GM23248 (cell line): ENCODE measurements at regions of chr13 and their contacts with region 1.

Region 1: GRCh38 chr13:102580552-102581169 is 16.1 kb upstream of the TPP2 start:
- DNase-seq: peak; percentile 78
- H3K4me3 ChIP-seq: no peak overlapping the region
- H3K27ac ChIP-seq: no peak overlapping the region
- H3K4me1 ChIP-seq: no peaks in the 10 kb centered on the region
- H3K27me3 ChIP-seq: peaks cover 15% of the 10 kb centered on the region

Region 2: GRCh38 chr13:102724923-102725322 is 144.3 kb after region 1 on chr13:
- in situ Hi-C with region 1: loop called (anchors 10 kb)
- DNase-seq: peak; percentile 80
- H3K4me3 ChIP-seq: no peak overlapping the region
- H3K27ac ChIP-seq: no peak overlapping the region
- H3K4me1 ChIP-seq: 0 out of 2 replicates have a peak, but pooled peaks cover 3% of the 10 kb centered on the region
- H3K27me3 ChIP-seq: 0 out of 2 replicates have a peak, but pooled peaks cover 2% of the 10 kb centered on the region

Region 3: DNA sequence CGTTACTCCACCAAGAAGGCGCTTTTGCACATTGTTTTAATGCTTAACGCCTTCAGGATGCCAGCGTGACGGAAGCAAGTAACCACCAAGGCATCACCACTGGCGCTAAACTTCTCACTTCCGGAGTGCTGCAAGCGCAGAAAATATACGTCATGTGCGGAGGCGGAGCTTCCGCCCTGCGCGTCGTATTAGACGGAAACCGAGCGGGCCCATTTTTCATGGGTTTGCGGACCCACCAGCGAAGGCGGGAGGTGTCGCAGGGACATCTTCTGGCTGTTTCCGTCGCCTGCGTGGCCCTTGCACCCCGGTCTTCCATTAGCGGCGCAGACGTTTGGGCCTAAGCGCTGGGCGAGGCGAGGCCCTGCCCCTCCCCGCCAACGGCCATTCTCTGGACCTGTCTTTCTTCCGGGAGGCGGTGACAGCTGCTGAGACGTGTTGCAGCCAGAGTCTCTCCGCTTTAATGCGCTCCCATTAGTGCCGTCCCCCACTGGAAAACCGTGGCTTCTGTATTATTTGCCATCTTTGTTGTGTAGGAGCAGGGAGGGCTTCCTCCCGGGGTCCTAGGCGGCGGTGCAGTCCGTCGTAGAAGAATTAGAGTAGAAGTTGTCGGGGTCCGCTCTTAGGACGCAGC is 265.1 kb after region 1 on chr13 and contains the start of gene ERCC5:
- in situ Hi-C with region 1: loop called (anchors 10 kb)
- DNase-seq: peak; percentile 98
- H3K4me3 ChIP-seq: peak within 1 kb of the TSS; percentile 94
- H3K27ac ChIP-seq: peak within 1 kb of the TSS; percentile 93
- H3K4me1 ChIP-seq: peaks cover 16% of the 10 kb centered on the region
- H3K27me3 ChIP-seq: no peaks in the 10 kb centered on the region
- total RNA-seq, gene ERCC5: 78.5 and 103 TPM in 2 replicates